AG04449 (cell line): ENCODE measurements at regions of chr12 and their contacts with region 1.

Region 1: DNA sequence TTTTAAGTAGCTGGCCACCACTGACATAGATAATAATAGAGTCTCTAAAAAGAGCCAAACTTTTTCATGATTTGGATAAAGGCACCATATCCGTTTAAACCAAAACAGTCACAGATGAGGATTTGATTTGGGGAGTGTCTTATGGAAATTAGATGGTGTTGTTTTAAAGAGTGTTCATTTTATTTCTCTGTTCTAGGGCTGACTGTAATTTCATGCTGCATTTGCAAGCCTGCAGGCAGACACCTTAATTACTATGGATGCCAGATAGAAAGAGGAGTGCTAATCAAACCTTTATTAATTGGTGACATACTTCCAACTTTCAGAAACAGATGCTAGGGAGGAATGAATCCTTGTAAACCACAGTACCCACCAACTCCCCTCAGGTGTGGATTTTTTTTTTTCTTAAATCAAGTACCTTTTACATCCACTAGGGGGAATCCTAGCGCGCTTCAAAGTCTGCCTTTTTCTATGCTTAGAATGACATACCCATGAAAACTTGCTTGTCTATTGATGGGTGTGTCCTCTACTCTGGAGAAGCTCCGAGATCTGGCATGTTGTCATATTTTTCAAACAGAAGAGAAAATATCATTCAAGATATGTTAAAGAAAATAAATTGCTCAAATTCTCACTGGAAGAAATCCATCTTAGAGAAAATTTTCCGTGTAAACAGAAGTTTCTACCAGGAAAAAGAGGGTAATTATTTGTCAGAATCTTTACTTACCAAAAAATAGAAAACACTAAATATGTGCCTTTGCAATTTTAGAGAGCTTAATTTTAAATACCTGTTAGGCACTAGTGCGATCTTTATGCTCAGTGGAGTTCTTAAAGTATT is 14.2 kb upstream of the PLXNC1 start:
- DNase-seq: peak; percentile 3
- H3K4me3 ChIP-seq: no peak overlapping the region
- CTCF ChIP-seq: peak; percentile 52

Region 2: GRCh38 chr12:94289461-94290312 is 155.5 kb after region 1 on chr12:
- CTCF ChIA-PET with region 1: no interaction called
- POLR2A ChIA-PET with region 1: no interaction called
- DNase-seq: peak; percentile 56
- H3K4me3 ChIP-seq: no peak overlapping the region; the same call in 1 of the 2 replicates
- CTCF ChIP-seq: no peak

Region 3: DNA sequence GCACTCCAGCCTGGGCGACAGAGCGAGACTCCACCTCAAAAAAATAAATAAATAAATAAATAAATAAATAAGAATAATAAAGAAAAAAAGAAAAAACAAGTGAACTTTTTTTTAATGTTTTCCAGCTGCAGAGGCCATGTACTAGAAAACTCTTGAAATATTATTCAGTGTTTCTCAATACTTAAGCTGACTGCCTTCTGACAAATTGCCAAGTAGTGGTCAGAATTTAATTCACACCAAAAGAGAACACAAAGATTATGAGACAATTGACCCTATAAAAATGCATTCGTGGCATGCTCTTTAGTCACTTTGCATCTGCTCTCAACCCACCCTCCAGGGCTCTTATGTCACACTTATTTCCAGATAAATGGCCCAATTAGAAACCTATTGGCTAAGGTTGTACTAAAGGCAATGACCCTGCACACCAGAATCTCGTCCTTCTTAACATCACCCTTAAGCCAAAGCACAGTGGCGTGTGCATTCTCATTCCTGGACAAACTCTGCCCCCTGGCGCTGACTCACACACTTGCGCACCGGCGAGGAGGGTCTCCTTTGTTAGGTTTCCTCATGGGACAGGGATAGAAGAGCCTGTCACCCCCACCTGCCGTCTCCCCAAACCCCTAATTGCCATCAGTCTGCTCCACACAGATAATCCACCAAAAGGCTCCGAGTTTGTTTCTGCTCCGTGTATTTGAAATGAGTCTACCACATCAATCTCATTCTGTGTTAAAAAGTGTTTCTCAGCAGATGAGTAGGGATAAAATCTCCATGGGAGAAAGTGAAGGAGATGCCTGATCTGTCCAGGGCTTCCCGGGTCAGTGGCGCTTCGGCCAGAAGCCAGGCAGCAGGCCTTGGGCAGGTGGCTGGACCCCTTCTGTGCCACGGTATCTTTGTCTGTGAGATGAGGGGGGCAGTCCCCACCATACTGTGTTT is 398.6 kb after region 1 on chr12:
- CTCF ChIA-PET with region 1: interaction called, 60 read pairs
- POLR2A ChIA-PET with region 1: no interaction called
- DNase-seq: no peak
- H3K4me3 ChIP-seq: no peak overlapping the region
- CTCF ChIP-seq: peak; percentile 82